CD8-positive, alpha-beta T cell (primary cell): ENCODE measurements at regions of chr7 and their contacts with region 1.

Region 1: GRCh38 chr7:140326116-140326928 is 72.0 kb downstream of the SLC37A3 start:
- DNase-seq: peak; percentile 13 to 66 (median 50)
- ATAC-seq: peak; percentile 79
- H3K4me3 ChIP-seq: no peak overlapping the region
- H3K4me3 Mint-ChIP-seq: no peak overlapping the region
- H3K27ac ChIP-seq: no peak overlapping the region
- H3K27ac Mint-ChIP-seq: no peak overlapping the region
- H3K4me1 ChIP-seq: peaks cover 8% of the 10 kb centered on the region
- H3K4me1 Mint-ChIP-seq: no peaks in the 10 kb centered on the region
- H3K27me3 ChIP-seq: no peaks in the 10 kb centered on the region
- H3K27me3 Mint-ChIP-seq: no peaks in the 10 kb centered on the region
- CTCF ChIP-seq: peak; percentile 57

Region 2: GRCh38 chr7:139602143-139602722 is 724.1 kb before region 1 on chr7:
- CTCF ChIA-PET with region 1: interaction called, 3 read pairs
- POLR2A ChIA-PET with region 1: no interaction called
- intact Hi-C with region 1: loop called in 1 of 2 experiments (anchors 5 kb)
- DNase-seq: peak in 2 of 9 experiments; percentile 33 to 49
- ATAC-seq: peak; percentile 61
- H3K4me3 ChIP-seq: no peak overlapping the region
- H3K4me3 Mint-ChIP-seq: no peak overlapping the region
- H3K27ac ChIP-seq: no peak overlapping the region
- H3K27ac Mint-ChIP-seq: no peak overlapping the region
- H3K4me1 ChIP-seq: no peaks in the 10 kb centered on the region
- H3K4me1 Mint-ChIP-seq: no peaks in the 10 kb centered on the region
- H3K27me3 ChIP-seq: no peaks in the 10 kb centered on the region
- H3K27me3 Mint-ChIP-seq: no peaks in the 10 kb centered on the region
- CTCF ChIP-seq: peak; percentile 57

Region 3: DNA sequence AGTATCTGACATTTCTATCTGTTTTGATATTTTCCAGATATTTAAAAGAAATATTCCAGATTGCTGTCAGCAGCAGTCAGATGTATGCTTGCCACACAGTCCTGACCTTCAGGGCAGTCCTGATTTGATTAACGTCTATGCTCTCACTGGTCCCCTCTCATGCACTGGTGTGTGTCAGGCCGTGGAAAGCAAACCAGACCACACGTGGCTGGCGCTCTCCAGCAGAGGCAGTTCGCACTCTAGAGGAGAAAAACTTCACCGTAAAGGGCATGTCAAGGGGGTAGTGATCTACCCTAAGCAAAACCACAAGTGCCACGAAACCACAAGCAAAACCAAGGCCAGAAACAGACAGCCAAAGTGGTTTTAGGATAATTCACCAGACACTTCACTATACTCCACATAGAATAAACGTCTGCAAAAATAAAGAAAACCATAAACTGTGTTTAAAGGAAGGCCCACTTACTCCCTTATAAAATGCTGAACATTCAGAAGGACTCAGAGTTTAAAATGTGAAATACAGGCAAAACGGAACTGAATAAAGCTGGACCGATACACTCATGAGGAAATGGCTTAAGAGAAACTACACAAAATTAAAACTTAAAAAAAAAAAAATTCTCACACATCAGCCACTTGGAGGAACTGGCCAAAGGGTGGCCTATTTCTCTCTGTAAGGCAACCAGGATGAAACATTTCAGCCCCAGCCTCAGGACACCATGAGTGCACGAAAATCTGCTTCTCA is 289.9 kb before region 1 on chr7:
- CTCF ChIA-PET with region 1: no interaction called
- POLR2A ChIA-PET with region 1: no interaction called
- intact Hi-C with region 1: loop called in 1 of 2 experiments (anchors 10 kb)
- DNase-seq: peak in 1 of 9 experiments; percentile 27
- ATAC-seq: peak; percentile 54
- H3K4me3 ChIP-seq: no peak overlapping the region
- H3K4me3 Mint-ChIP-seq: no peak overlapping the region
- H3K27ac ChIP-seq: no peak overlapping the region
- H3K27ac Mint-ChIP-seq: peak overlapping the region; percentile 39
- H3K4me1 ChIP-seq: peaks cover 10% of the 10 kb centered on the region
- H3K4me1 Mint-ChIP-seq: peaks cover 31% of the 10 kb centered on the region
- H3K27me3 ChIP-seq: no peaks in the 10 kb centered on the region
- H3K27me3 Mint-ChIP-seq: no peaks in the 10 kb centered on the region
- CTCF ChIP-seq: no peak